ENCODE measurements at regions of chr20 and their contacts with region 1.

Region 1: DNA sequence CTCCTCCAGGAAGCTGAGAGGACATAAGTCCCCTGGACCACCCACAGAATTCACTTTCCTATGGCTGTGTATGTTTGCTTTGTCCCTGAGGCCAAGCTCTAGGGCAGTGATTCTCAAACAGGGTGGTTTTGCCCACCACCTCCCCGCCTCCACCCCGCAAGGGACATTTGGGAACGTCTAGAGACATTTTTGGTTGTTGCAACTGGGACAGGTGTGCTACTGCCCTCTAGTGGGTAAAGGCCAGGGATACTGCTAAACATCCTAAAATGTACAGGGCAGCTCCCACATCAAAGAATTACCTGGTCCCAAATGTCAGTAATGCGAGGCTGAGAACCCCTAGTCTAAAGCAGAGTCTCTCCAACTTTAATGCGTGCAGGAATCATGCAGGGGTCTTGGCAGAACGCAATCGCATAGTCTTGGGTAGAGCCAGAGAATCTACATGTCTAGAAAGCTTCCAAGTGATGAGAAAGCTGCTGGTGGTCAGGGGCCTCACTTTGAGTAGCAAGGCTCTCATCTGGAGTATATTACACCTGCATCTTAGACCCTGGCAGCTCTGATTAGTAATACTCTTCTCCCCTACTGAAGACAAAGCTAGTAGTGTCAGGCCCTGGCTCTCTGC is 5.1 kb downstream of the KCNS1 start:
- DNase-seq: peak; percentile 76
- H3K4me3 Mint-ChIP-seq: no peak overlapping the region
- H3K27ac Mint-ChIP-seq: no peak overlapping the region
- H3K4me1 Mint-ChIP-seq: no peaks in the 10 kb centered on the region
- H3K27me3 Mint-ChIP-seq: no peaks in the 10 kb centered on the region
- CTCF ChIP-seq: peak; percentile 72

Region 2: DNA sequence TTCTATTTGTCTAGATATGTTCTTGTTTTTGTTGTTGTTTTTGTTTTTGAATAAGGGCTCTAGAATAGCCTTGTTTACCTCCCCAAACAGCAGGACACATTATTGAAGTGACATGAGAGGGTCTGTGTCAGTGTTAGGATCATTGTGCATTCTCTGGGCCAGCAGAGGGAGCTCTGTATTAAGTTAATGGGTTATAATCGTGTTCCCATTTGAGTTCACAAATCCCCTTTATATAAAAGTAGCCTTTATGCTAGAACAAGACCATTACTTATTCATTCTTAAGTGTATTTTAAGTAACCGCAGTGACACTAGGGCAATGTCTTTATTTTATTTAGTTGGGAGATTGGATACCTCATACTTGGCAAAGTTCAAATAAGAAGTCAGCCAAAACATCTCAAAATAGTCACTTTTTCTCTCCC is 84.7 kb before region 1 on chr20:
- CTCF ChIA-PET with region 1: interaction called, 177 read pairs
- POLR2A ChIA-PET with region 1: interaction called, 30 read pairs
- intact Hi-C with region 1: loop called (anchors 1 kb)
- DNase-seq: peak; percentile 75
- H3K4me3 Mint-ChIP-seq: no peak overlapping the region
- H3K27ac Mint-ChIP-seq: peak overlapping the region; percentile 6
- H3K4me1 Mint-ChIP-seq: peaks cover 22% of the 10 kb centered on the region
- H3K27me3 Mint-ChIP-seq: no peaks in the 10 kb centered on the region
- CTCF ChIP-seq: peak; percentile 63

Region 3: GRCh38 chr20:45044084-45044573 is 51.7 kb before region 1 on chr20:
- CTCF ChIA-PET with region 1: interaction called, 247 read pairs
- POLR2A ChIA-PET with region 1: interaction called, 32 read pairs
- intact Hi-C with region 1: loop called (anchors 1 kb)
- DNase-seq: peak; percentile 88
- H3K4me3 Mint-ChIP-seq: no peak overlapping the region
- H3K27ac Mint-ChIP-seq: peak overlapping the region; percentile 73
- H3K4me1 Mint-ChIP-seq: peaks cover 33% of the 10 kb centered on the region
- H3K27me3 Mint-ChIP-seq: no peaks in the 10 kb centered on the region
- CTCF ChIP-seq: peak; percentile 90

Region 4: GRCh38 chr20:45070932-45071632 is 24.8 kb before region 1 on chr20:
- CTCF ChIA-PET with region 1: interaction called, 53 read pairs
- POLR2A ChIA-PET with region 1: interaction called, 5 read pairs
- intact Hi-C with region 1: no loop called
- DNase-seq: peak; percentile 76
- H3K4me3 Mint-ChIP-seq: no peak overlapping the region
- H3K27ac Mint-ChIP-seq: no peak overlapping the region
- H3K4me1 Mint-ChIP-seq: peaks cover 21% of the 10 kb centered on the region
- H3K27me3 Mint-ChIP-seq: no peaks in the 10 kb centered on the region
- CTCF ChIP-seq: no peak

Region 5: GRCh38 chr20:45128071-45128470 is 32.2 kb after region 1 on chr20:
- CTCF ChIA-PET with region 1: interaction called, 19 read pairs
- POLR2A ChIA-PET with region 1: interaction called, 3 read pairs
- intact Hi-C with region 1: no loop called
- DNase-seq: peak; percentile 27
- H3K4me3 Mint-ChIP-seq: no peak overlapping the region
- H3K27ac Mint-ChIP-seq: no peak overlapping the region
- H3K4me1 Mint-ChIP-seq: no peaks in the 10 kb centered on the region
- H3K27me3 Mint-ChIP-seq: peaks cover 20% of the 10 kb centered on the region
- CTCF ChIP-seq: no peak

Region 6: GRCh38 chr20:45311589-45312211 is 215.8 kb after region 1 on chr20:
- CTCF ChIA-PET with region 1: interaction called, 14 read pairs
- POLR2A ChIA-PET with region 1: no interaction called
- intact Hi-C with region 1: no loop called
- DNase-seq: peak; percentile 55
- H3K4me3 Mint-ChIP-seq: no peak overlapping the region
- H3K27ac Mint-ChIP-seq: no peak overlapping the region
- H3K4me1 Mint-ChIP-seq: no peaks in the 10 kb centered on the region
- H3K27me3 Mint-ChIP-seq: no peaks in the 10 kb centered on the region
- CTCF ChIP-seq: peak; percentile 80

Measured in MCF 10A (cell line).